Left ventricle myocardium inferior (tissue), 1 donor: ENCODE measurements at regions of chr11 and their contacts with region 1.

Region 1: DNA sequence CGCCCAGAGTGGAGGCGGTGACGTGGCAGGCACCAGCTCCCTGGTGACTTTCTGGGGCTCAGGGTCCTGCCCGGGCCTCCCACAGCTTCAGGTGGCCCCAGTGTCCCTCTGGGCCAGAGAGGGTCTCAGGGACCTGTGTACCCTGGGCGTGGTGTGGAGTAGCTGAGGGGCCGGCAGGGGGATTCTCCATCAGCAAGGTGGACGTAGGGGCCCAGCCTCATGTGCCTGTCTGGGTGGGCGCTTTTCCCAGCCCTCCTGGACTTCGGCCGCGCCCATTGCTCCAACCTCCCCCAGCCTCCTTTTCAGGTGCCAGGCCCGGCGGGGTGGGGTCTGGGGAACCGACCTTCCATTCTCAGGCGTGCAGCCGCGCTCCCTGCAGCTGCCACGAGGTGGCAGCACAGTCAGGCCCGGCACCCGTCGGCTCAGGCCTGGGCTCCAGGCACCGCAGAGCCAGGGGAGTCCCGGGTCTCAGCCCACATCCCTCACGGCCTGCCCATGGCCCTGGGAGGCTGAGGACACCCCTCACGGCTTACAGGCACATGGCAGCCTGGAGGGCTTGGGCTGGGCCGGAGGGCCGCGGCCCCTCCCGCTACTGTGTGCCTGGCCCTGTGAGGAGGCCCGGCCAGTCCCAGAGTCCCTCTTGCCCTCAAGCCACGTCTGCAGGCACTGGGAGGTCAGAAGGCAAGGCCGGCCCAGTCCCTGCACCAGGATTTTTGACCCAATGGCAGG is 19.9 kb upstream of the MUC5B start:
- DNase-seq: peak; percentile 49
- H3K4me3 ChIP-seq: no peak overlapping the region
- H3K27ac ChIP-seq: no peak overlapping the region
- H3K4me1 ChIP-seq: peaks cover 7% of the 10 kb centered on the region
- H3K27me3 ChIP-seq: peaks cover 83% of the 10 kb centered on the region
- CTCF ChIP-seq: peak; percentile 95

Region 2: DNA sequence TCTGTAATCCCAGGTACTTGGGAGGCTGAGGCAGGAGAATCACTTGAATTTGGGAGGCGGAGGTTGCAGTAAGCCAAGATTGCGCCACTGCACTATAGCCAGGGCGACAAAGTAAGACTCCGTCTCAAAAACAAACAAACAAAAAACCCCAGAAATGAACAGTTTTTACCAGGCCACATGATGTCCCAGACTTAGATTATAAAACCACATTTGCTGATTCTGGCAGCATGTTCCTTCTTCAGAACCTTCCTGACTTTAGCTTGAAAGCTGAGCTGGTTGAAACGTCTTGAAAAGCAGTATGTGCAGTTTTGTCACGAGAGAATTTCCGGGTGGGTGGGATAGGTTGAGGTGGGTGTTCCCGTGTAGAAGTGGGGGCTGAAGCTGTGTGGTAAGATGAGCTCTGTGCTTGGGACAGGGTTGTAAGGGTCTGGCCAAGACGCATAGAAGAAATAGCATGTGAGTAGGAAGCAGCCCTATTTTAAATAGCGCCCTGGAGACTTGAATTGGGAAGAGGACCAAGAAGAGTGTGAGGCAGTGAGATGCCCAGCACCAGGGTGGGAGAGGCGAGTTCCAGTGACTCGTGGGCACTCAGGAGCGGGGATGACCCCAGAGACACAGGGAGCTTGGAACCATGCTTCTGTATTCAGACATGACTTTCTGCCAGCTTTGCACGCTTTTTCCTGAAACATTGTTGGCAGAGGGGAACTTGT is 269.6 kb before region 1 on chr11:
- intact Hi-C with region 1: no loop called
- DNase-seq: no peak
- H3K4me3 ChIP-seq: peak overlapping the region; percentile 14
- H3K27ac ChIP-seq: peak overlapping the region; percentile 54
- H3K4me1 ChIP-seq: peaks cover 69% of the 10 kb centered on the region
- H3K27me3 ChIP-seq: no peaks in the 10 kb centered on the region
- CTCF ChIP-seq: no peak

Region 3: GRCh38 chr11:986294-986959 is 216.5 kb before region 1 on chr11:
- intact Hi-C with region 1: no loop called
- DNase-seq: no peak
- H3K4me3 ChIP-seq: no peak overlapping the region
- H3K27ac ChIP-seq: no peak overlapping the region
- H3K4me1 ChIP-seq: peaks cover 8% of the 10 kb centered on the region
- H3K27me3 ChIP-seq: no peaks in the 10 kb centered on the region
- CTCF ChIP-seq: no peak

Region 4: DNA sequence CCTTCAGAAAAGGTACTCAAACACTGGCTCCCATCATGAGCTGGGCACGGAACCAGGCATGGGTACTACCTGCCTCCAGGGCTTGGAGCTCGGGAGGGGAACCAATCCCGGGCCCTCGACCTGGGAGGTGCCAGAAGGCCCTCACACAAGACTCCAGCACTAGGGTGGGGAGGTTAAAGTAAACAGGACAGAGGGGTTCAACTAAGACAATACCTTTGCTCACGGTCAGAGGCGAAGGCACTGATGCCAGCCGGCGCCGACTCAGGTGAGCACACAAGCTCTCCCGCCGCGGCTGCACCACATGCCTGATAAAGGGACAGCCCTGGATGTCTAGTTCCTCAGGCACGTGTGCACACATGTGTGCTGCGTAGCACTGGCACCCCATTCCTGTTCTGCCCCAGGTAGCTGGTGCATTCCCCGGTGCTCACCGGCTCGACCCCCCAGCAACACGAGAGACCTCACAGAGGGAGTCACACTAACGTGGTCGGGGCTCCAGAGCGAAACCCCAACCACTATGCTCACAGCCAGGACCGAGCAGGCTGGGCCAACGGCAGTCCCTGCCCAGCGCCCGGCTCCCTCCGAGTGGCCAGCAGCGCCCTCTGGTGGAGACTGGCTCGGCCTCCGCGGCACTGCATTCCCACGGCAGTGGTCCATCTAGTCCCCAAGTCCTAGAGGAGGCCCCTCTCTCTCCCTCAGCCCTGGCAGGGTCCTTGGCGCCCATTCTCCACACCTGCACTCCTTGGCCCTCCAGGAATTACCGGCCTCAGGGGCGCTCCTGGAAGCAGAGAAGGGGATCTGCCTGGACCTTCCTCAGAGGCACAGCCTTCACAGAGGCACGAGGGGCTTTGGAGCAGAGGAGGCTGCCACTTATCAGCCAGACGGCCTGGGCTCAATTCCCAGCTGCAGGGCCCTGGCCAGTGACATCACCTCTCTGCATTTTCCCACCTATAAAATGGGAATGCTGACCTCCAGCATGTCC is 312.4 kb after region 1 on chr11:
- intact Hi-C with region 1: loop called (anchors 10 kb)
- DNase-seq: peak; percentile 78
- H3K4me3 ChIP-seq: peak overlapping the region; percentile 29
- H3K27ac ChIP-seq: no peak overlapping the region
- H3K4me1 ChIP-seq: peaks cover 79% of the 10 kb centered on the region
- H3K27me3 ChIP-seq: no peaks in the 10 kb centered on the region
- CTCF ChIP-seq: peak; percentile 97